ENCODE measurements at regions of chr9 and their contacts with region 1.

Region 1: DNA sequence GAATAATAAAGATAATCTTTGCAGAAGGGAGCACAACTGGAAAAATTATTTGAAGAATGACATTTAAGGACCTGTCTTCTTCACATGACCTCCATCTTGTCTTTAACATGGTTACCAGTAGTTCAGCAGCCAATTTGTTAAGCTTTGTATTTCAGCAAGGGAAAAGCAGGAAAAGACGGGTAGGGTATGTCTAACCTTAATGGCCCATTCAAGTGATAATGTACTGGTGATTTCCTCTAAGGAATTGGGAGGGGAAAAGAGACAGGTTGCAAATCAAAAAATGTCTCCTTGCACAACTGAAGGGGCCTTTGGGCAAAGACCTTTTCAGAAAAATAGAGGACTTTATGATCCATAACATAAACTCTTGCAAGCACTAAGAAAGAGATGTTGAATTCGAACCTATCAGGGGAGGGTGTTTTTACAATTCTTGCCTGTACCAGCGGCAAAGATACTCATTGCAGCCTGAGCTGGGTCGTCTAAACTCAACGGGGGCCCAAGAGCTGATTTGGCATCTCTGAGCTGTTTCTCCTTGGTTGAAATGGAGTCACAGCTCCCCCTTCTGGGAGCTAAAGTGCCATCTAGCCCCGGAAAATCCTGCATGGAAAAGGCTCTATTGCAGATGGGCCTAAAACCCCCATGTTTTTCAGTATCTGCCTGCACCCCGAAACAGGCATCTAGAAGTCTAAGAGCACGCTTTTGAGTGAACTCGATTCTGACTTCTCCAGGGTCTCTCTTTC is 3.8 kb downstream of the BRINP1 start:
- DNase-seq: peak; percentile 40
- H3K4me3 ChIP-seq: no peak overlapping the region
- H3K27ac ChIP-seq: no peak overlapping the region
- H3K4me1 ChIP-seq: peaks cover 8% of the 10 kb centered on the region
- H3K27me3 ChIP-seq: peaks cover 9% of the 10 kb centered on the region
- CTCF ChIP-seq: peak; percentile 59 to 83

Region 2: GRCh38 chr9:117782931-117783788 is 1582.3 kb before region 1 on chr9:
- CTCF ChIA-PET with region 1: no interaction called
- dilution Hi-C with region 1: no loop called
- in situ Hi-C with region 1: no loop called
- intact Hi-C with region 1: loop called (anchors 1 kb)
- DNase-seq: peak; percentile 71
- H3K4me3 ChIP-seq: peak overlapping the region; percentile 54 to 72 (median 55)
- H3K27ac ChIP-seq: no peak overlapping the region
- H3K4me1 ChIP-seq: peaks cover 7% of the 10 kb centered on the region
- H3K27me3 ChIP-seq: no peaks in the 10 kb centered on the region
- CTCF ChIP-seq: peak; percentile 92 to 93

Region 3: GRCh38 chr9:118595719-118596305 is 769.6 kb before region 1 on chr9:
- CTCF ChIA-PET with region 1: interaction called, 7 read pairs
- dilution Hi-C with region 1: no loop called
- in situ Hi-C with region 1: loop called (anchors 10 kb)
- intact Hi-C with region 1: loop called (anchors 1 kb)
- DNase-seq: peak; percentile 60
- H3K4me3 ChIP-seq: no peak overlapping the region
- H3K27ac ChIP-seq: no peak overlapping the region
- H3K4me1 ChIP-seq: no peaks in the 10 kb centered on the region
- H3K27me3 ChIP-seq: no peaks in the 10 kb centered on the region
- CTCF ChIP-seq: peak; percentile 60 to 77

Region 4: DNA sequence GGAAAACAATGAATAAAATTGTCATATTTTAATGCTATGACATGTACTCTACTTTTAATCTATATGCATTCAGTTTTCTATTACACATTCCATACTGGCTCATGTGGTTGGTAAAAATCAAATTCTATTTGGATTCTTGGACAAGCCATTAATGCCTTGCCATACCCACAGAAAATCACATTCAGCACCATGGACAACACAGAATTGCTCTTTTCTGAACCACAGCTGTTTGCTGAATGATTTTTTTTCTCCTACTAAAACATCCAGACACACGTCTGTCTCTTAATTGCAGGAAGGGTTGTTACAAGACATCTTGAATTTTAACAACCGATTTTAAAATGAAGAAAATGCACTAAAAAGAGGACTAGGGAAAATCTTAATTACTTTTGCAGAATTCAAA is 671.8 kb before region 1 on chr9:
- CTCF ChIA-PET with region 1: no interaction called
- dilution Hi-C with region 1: no loop called
- in situ Hi-C with region 1: no loop called
- intact Hi-C with region 1: no loop called
- DNase-seq: peak; percentile 3
- H3K4me3 ChIP-seq: no peak overlapping the region
- H3K27ac ChIP-seq: no peak overlapping the region
- H3K4me1 ChIP-seq: no peaks in the 10 kb centered on the region
- H3K27me3 ChIP-seq: no peaks in the 10 kb centered on the region
- CTCF ChIP-seq: no peak

Region 5: DNA sequence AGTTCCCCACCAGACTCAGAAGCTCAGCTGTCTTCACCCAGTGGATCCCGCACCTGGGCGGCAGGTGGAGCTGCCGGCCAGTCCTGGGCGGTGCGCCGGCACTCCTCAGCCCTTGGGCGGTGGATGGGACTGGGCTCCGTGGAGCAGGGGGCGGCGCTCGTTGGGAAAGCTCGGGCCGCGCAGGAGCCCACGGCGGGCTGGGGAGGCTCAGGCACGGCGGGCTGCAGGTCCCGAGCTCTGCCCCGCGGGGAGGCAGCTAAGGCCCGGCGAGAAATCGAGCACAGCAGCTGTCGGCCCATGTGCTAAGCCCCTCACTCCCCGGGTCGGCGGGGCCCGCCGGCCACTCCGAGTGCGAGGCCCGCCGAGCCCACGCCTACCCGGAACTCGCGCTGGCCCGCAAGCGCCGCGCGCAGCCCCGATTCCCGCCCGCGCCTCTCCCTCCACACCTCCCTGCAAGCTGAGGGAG is 556.3 kb before region 1 on chr9:
- CTCF ChIA-PET with region 1: interaction called, 4 read pairs
- dilution Hi-C with region 1: no loop called
- in situ Hi-C with region 1: no loop called
- intact Hi-C with region 1: loop called (anchors 1 kb)
- DNase-seq: no peak
- H3K4me3 ChIP-seq: no peak overlapping the region
- H3K27ac ChIP-seq: no peak overlapping the region
- H3K4me1 ChIP-seq: no peaks in the 10 kb centered on the region
- H3K27me3 ChIP-seq: no peaks in the 10 kb centered on the region
- CTCF ChIP-seq: no peak

Region 6: GRCh38 chr9:119137479-119137878 is 228.0 kb before region 1 on chr9:
- CTCF ChIA-PET with region 1: no interaction called
- dilution Hi-C with region 1: no loop called
- in situ Hi-C with region 1: no loop called
- intact Hi-C with region 1: loop called (anchors 1 kb)
- DNase-seq: no peak
- H3K4me3 ChIP-seq: no peak overlapping the region
- H3K27ac ChIP-seq: no peak overlapping the region
- H3K4me1 ChIP-seq: no peaks in the 10 kb centered on the region
- H3K27me3 ChIP-seq: no peaks in the 10 kb centered on the region
- CTCF ChIP-seq: no peak

Region 7: DNA sequence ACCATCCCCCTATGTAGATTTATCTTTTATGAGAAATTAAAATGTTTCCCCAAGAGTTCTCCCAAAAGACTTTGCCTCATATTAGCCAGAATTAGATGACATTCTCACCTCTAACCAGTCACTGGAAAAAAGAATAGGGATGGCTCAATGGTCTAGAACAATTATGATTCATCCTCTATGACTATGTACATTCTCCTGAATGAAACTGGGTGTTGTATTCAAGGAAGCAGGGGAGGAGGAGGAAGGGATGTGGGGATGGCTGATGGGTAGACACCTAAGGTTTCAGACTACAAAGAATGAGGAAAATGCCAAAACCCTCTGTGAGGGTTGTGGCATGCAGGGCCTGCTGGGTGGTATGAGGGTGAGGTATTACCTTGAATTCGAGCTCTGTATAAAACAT is 53.3 kb after region 1 on chr9:
- CTCF ChIA-PET with region 1: no interaction called
- dilution Hi-C with region 1: loop called (anchors 5 kb)
- in situ Hi-C with region 1: no loop called
- intact Hi-C with region 1: no loop called
- DNase-seq: peak; percentile 14
- H3K4me3 ChIP-seq: no peak overlapping the region
- H3K27ac ChIP-seq: no peak overlapping the region
- H3K4me1 ChIP-seq: no peaks in the 10 kb centered on the region
- H3K27me3 ChIP-seq: no peaks in the 10 kb centered on the region
- CTCF ChIP-seq: no peak

Measured in mammary epithelial cell (primary cell).